ENCODE measurements at regions of chr3 and their contacts with region 1.

Region 1: GRCh38 chr3:50611464-50612233 is at the start of gene CISH:
- DNase-seq: peak; percentile 91
- H3K4me3 ChIP-seq: peak within 1 kb of the TSS; percentile 52 to 62
- H3K27ac ChIP-seq: peak within 1 kb of the TSS; percentile 71 to 78
- H3K4me1 ChIP-seq: peaks cover 2% of the 10 kb centered on the region
- H3K27me3 ChIP-seq: no peaks in the 10 kb centered on the region
- CTCF ChIP-seq: peak in 1 of 4 experiments; percentile 39
- POLR2A ChIP-seq: peak; percentile 92
- total RNA-seq, gene CISH: 5.1 to 7.6 TPM

Region 2: GRCh38 chr3:50358911-50359759 is 252.5 kb before region 1 on chr3 and contains the start of gene TMEM115:
- intact Hi-C with region 1: loop called (anchors 5 kb)
- DNase-seq: peak; percentile 99
- H3K4me3 ChIP-seq: peak within 1 kb of the TSS; percentile 68 to 87
- H3K27ac ChIP-seq: peak within 1 kb of the TSS; percentile 83 to 85
- H3K4me1 ChIP-seq: peaks cover 24% of the 10 kb centered on the region
- H3K27me3 ChIP-seq: no peaks in the 10 kb centered on the region
- CTCF ChIP-seq: peak in 1 of 4 experiments; percentile 21
- POLR2A ChIP-seq: peak; percentile 57
- total RNA-seq, gene TMEM115: 73.0 to 76.7 TPM

Region 3: DNA sequence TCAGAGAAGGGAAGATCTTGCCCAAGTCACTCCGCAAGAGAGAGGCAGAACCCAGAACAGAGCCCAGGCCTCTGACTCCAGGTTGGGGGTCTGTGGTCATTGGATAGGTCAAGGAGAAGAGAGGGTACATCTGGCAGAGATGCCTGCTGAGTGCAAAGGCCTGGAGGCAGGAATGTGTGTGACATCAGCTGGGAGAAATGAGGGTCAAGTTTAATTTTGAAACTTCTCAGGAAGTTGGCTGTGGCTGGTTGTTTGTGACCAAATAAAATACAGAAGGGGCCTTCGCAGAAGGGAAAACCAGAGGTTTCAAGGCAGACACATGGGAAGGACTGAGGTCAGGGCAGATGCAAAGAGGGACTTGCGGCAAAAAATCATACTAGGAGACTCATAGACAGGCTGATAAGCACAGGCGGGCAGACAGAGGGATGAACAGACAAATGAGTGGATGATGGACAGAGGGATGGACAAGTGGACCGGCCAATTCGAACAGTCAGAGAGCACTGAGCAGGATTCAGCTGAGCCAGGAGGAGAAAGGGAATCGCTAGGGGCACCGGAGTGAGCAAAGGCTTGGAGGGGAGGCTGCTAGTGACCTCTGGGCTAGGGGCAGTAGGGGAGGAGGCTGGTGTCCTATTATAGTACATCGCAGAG is 79.5 kb before region 1 on chr3:
- intact Hi-C with region 1: no loop called
- DNase-seq: no peak
- H3K4me3 ChIP-seq: no peak overlapping the region
- H3K27ac ChIP-seq: no peak overlapping the region
- H3K4me1 ChIP-seq: no peaks in the 10 kb centered on the region
- H3K27me3 ChIP-seq: no peaks in the 10 kb centered on the region
- CTCF ChIP-seq: no peak
- POLR2A ChIP-seq: no peak

Region 4: DNA sequence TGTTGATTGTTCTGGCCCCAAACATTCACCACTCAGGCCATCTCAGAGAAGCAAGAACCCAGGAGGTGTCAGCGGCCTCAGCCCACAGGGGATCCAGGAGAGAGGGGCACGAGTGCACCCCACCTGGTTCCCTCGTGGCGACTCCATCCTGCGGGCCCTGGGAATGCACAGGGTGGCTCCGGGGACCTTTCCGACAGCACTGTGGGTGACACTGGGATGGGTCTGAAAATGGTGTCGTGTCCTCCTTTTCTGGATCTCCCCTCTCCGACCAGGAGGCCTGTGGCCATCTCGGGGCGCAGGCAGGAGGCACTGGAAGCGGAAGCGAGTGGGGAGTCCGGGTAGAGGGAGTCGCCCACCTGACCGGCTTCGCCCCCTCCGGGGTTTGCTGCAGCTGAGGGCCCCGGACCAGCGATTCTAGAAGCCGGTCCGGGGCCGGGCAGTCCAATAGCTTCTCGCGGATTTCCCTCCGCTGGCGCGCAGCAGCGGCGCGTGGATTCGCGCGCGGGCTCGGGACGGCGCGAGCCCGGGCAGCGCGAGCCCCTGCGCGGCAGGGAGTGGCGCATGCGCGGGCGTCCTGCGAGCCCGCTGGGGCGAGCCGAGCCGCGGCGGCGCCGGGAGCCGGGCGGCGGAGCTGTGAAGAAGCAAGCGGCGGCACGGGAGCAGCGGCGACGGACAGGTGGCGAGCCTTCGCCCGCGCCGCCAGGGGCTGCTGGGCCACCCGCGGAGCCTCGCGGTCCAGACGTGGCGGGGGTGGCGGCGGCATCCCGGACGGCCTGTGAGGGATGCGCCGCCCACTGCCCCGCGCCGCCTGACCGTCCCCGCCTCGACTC is 62.9 kb after region 1 on chr3 and contains the start of gene DOCK3:
- intact Hi-C with region 1: loop called (anchors 2 kb)
- DNase-seq: peak; percentile 28
- H3K4me3 ChIP-seq: peak within 1 kb of the TSS; percentile 39 to 44
- H3K27ac ChIP-seq: no peak within 1 kb of the TSS
- H3K4me1 ChIP-seq: no peaks in the 10 kb centered on the region
- H3K27me3 ChIP-seq: no peaks in the 10 kb centered on the region
- CTCF ChIP-seq: peak in 1 of 4 experiments; percentile 4
- POLR2A ChIP-seq: no peak
- total RNA-seq, gene DOCK3: 0.36 to 6.3 TPM

Region 5: GRCh38 chr3:51384726-51385473 is 773.3 kb after region 1 on chr3 and contains the start of gene MANF:
- intact Hi-C with region 1: loop called (anchors 5 kb)
- DNase-seq: peak; percentile 99
- H3K4me3 ChIP-seq: peak within 1 kb of the TSS; percentile 78 to 94
- H3K27ac ChIP-seq: peak within 1 kb of the TSS; percentile 91
- H3K4me1 ChIP-seq: peaks cover 16% of the 10 kb centered on the region
- H3K27me3 ChIP-seq: no peaks in the 10 kb centered on the region
- CTCF ChIP-seq: peak in 2 of 4 experiments; percentile 50 to 51
- POLR2A ChIP-seq: peak; percentile 89
- total RNA-seq, gene MANF: 30.6 to 81.4 TPM

Region 6: GRCh38 chr3:51670823-51671733 is 1059.4 kb after region 1 on chr3 and contains the start of gene TEX264:
- intact Hi-C with region 1: loop called (anchors 10 kb)
- DNase-seq: peak; percentile 92
- H3K4me3 ChIP-seq: peak within 1 kb of the TSS; percentile 78 to 94
- H3K27ac ChIP-seq: peak within 1 kb of the TSS; percentile 82 to 92
- H3K4me1 ChIP-seq: peaks cover 20% of the 10 kb centered on the region
- H3K27me3 ChIP-seq: no peaks in the 10 kb centered on the region
- CTCF ChIP-seq: peak in 2 of 4 experiments; percentile 21 to 30
- POLR2A ChIP-seq: peak; percentile 74
- total RNA-seq, gene TEX264: 157 to 214 TPM

Measured in prostate gland (tissue), 2 donors.